ENCODE measurements at regions of chr1 and their contacts with region 1.

Region 1: DNA sequence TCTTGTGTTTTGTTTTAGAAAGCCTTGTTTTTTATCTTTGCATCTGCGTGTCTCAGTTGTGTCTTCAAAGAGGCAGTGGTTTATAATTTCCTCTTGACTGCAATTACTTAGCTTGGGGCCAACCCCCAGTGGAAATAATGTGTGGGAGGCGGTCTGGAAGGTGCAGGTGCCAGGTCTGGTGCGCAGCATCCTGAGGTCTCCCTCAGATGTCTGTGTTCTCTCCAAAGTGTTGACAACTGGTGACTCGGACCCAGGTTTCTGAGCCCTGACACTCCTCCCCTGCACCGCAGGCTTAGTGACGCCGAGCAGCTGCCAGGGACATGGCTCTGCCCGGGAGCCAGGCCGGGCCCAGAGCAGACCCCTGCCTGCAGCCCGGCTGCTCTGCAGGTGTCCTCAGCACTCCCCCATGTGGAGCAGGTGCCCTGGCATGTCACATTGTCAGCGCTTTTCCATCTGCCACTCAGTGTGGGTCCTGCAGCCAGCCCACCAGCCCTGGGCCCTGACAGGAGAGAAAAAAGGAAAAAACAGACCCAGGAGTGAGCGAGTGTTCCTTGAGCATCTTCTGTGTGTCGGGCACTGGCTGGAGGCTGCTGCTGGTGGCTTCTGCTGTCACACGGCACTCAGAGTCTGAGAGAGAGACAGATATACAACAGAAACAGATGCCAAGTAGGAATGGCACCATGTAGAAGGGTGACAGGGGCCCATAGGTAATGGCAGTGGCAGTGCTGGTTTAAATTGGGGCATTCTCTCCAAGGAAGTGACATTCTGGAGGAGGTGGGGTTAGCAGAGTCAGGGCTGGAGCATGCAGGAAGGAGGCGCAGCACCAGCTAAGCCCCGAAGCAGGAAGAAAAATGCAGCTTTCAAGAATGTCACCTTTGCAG is 24.8 kb upstream of the SELENON start:
- DNase-seq: peak; percentile 94
- ATAC-seq: peak; percentile 85
- H3K4me3 Mint-ChIP-seq: peak overlapping the region; percentile 57
- H3K27ac Mint-ChIP-seq: peak overlapping the region; percentile 84
- H3K4me1 Mint-ChIP-seq: peaks cover 80% of the 10 kb centered on the region
- H3K27me3 Mint-ChIP-seq: no peaks in the 10 kb centered on the region

Region 2: GRCh38 chr1:25727635-25728330 is 47.4 kb before region 1 on chr1:
- CTCF ChIA-PET with region 1: interaction called, 4 read pairs
- POLR2A ChIA-PET with region 1: no interaction called
- intact Hi-C with region 1: loop called in 1 of 2 experiments (anchors 1 kb)
- DNase-seq: no peak
- ATAC-seq: peak; percentile 3
- H3K4me3 Mint-ChIP-seq: no peak overlapping the region
- H3K27ac Mint-ChIP-seq: peak overlapping the region; percentile 32
- H3K4me1 Mint-ChIP-seq: peaks cover 73% of the 10 kb centered on the region
- H3K27me3 Mint-ChIP-seq: no peaks in the 10 kb centered on the region